ENCODE measurements at regions of chr19 and their contacts with region 1.

Region 1: GRCh38 chr19:10321874-10322835 is 6.3 kb upstream of the FDX2 start:
- DNase-seq: no peak
- ATAC-seq: no peak
- H3K4me3 ChIP-seq: no peak overlapping the region
- H3K27ac ChIP-seq: no peak overlapping the region
- H3K4me1 ChIP-seq: no peaks in the 10 kb centered on the region
- H3K27me3 ChIP-seq: no peaks in the 10 kb centered on the region
- CTCF ChIP-seq: no peak

Region 2: DNA sequence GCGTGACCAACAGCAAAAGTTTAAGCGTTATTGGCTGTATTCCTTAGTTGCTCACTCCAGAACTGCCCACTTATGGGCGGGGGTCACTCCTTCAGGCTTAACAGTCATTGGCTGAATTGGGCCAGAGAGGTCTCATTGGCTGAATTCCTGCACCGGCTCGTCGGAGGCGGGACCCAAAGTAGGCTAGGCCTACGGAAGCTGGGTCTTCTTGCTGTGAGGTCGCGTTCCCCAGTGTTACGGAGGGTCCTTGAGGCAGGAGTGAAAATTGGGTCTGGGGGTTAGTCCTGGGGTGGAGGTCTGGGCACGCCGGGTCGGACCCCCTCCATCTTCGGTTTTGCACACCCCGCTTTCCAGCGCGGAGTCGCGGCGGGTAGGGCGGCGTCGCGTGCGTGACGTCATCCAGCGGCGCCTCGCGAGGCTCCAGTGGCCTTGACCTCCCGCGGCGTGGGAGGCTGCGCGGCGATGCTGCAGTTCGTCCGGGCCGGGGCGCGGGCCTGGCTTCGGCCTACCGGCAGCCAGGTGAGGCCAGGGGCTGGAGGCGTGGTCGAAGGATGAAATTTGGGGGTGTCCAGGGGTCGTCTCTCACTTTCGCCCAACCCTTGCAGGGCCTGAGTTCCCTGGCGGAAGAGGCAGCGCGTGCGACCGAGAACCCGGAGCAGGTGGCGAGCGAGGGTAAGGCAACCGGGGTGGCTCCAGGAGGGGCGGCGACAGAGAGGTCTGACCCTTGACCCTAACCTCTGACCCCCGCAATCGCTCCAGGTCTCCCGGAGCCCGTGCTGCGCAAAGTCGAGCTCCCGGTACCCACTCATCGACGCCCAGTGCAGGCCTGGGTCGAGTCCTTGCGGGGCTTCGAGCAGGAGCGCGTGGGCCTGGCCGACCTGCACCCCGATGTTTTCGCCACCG is 70.1 kb before region 1 on chr19 and contains the start of gene MRPL4:
- CTCF ChIA-PET with region 1: interaction called, 12 read pairs
- POLR2A ChIA-PET with region 1: no interaction called
- in situ Hi-C with region 1: no loop called
- intact Hi-C with region 1: no loop called
- DNase-seq: peak; percentile 90
- ATAC-seq: peak; percentile 99
- H3K4me3 ChIP-seq: peak within 1 kb of the TSS; percentile 79 to 83
- H3K27ac ChIP-seq: peak within 1 kb of the TSS; percentile 84
- H3K4me1 ChIP-seq: no peaks in the 10 kb centered on the region
- H3K27me3 ChIP-seq: no peaks in the 10 kb centered on the region
- CTCF ChIP-seq: no peak
- total RNA-seq, gene MRPL4: 62.8 TPM

Region 3: DNA sequence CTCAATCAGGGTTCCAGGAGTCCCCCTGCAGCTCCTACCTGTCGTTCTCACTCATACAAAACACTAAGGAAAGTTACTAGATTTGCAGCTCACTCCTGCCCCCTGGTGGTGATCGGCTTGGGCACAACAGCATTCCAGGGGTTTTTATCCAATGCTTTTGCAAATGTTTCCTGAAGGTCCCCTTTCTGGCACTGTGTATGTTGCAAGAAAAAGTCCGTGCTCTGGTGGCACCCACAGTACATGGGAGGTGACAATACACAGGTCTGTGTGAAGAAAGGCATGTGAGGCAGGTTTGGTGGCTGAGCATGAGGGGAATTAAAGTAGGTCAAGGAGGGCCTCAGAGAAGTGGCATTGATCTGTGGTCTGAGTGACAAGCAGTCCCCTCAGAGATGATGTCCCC is 66.8 kb after region 1 on chr19:
- CTCF ChIA-PET with region 1: no interaction called
- POLR2A ChIA-PET with region 1: no interaction called
- in situ Hi-C with region 1: no loop called
- intact Hi-C with region 1: no loop called
- DNase-seq: peak; percentile 60
- ATAC-seq: peak; percentile 79
- H3K4me3 ChIP-seq: no peak overlapping the region
- H3K27ac ChIP-seq: no peak overlapping the region
- H3K4me1 ChIP-seq: no peaks in the 10 kb centered on the region
- H3K27me3 ChIP-seq: no peaks in the 10 kb centered on the region
- CTCF ChIP-seq: peak; percentile 87

Region 4: DNA sequence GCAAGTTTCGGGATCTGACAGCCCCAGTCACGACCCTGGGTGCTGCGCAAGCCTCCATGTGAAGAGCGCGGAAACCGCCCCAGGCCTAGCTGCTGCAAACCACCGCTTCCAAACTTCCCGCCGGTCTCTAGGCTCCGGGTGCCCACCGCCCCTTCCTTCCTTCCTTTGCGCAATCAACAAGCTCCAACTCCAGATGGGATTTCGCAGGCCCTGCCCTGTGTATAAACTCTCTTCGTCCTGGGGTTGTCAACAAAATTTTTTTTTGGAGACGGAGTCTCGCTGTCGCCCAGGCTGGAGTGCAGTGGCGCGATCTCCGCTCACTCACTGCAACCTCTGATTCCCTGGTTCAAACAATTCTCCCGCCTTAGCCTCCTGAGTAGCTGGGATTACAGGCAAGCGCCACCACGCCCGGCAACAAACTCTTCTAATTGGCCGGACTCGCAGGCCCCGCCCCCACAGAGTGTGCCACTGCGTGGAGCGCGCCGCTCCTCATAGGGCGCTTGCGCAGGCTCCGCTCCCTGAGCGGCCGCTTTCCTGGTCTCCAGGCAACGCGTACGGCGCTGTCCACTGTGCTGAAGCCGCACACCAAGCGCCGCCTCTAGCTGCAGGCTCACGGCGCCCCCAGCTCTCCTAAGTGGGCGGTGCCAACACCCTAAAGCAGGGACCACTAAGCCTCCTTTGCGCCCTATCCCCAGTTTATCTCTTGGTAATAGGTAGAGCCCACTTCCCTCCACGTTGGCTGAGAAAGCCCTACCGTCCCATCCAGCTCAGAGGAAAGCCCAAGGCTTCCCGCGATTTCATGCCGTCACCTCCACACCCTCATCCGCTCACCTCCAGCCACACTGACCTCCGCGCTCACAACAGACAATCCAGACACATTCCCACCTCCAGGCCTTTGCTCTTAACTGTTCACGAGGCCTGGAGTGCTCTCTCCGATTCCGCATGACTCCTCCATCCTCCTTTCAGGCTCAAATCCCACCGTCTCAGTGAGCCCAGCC is 373.5 kb after region 1 on chr19:
- CTCF ChIA-PET with region 1: interaction called, 14 read pairs
- POLR2A ChIA-PET with region 1: no interaction called
- in situ Hi-C with region 1: no loop called
- intact Hi-C with region 1: no loop called
- DNase-seq: no peak
- ATAC-seq: peak; percentile 95
- H3K4me3 ChIP-seq: peak overlapping the region; percentile 21 to 40
- H3K27ac ChIP-seq: no peak overlapping the region
- H3K4me1 ChIP-seq: peaks cover 4% of the 10 kb centered on the region
- H3K27me3 ChIP-seq: no peaks in the 10 kb centered on the region
- CTCF ChIP-seq: no peak